ENCODE measurements at regions of chr21 and their contacts with region 1.

Region 1: GRCh38 chr21:29164325-29164942 is 34.0 kb downstream of the MAP3K7CL start:
- DNase-seq: peak in 2 of 5 donors; percentile 62 to 86
- H3K4me3 ChIP-seq: no peak overlapping the region
- H3K27ac ChIP-seq: no peak overlapping the region
- H3K4me1 ChIP-seq: no peaks in the 10 kb centered on the region
- H3K27me3 ChIP-seq: no peaks in the 10 kb centered on the region
- CTCF ChIP-seq: peak; percentile 79

Region 2: DNA sequence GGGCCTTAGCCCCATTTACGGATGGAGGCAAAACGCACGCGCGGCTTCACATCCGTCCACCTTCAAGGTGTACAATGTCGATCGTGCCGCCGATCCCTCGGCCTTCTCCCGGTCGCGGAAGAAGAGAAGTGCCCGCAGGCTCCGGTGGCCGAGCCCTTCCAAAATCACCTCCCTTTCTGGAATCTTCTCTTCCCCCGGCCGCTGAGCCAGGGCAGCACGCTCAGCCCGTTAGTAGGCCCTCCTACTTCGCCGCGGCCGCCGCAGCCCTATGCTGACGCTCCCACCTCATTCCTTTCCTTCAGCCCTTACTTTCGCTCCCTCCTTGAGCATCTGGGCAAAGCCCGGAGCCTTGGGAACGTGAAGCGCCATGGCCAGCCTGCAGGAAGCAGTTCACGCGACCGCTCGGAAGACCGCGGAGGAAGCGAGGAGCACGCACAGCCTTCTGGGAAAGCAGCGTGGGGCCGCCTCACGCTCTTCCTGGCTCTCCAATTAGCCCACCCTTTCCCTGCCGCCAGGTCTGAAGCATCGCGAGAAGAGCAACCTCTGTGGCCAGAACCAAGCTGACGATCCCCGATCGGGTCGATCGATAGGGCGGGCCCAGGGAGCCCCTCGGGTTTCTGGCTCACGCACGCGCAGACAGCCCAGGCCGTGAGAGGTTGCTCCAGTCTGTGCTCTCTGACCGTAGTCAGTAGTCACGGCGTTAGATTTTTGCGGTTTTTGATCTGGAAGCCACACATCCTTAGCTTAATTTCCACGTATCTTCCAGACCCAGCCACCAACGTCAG is 91.0 kb before region 1 on chr21 and contains the start of gene CCT8:
- intact Hi-C with region 1: no loop called
- DNase-seq: peak; percentile 99 to 100 (median 100)
- H3K4me3 ChIP-seq: peak within 1 kb of the TSS; percentile 90 to 99 (median 97)
- H3K27ac ChIP-seq: peak within 1 kb of the TSS; percentile 93 to 99
- H3K4me1 ChIP-seq: peaks cover 0 to 18% (median 12%) of the 10 kb centered on the region in 3 donors
- H3K27me3 ChIP-seq: no peaks in the 10 kb centered on the region
- CTCF ChIP-seq: no peak
- total RNA-seq, gene CCT8: 101 TPM

Region 3: DNA sequence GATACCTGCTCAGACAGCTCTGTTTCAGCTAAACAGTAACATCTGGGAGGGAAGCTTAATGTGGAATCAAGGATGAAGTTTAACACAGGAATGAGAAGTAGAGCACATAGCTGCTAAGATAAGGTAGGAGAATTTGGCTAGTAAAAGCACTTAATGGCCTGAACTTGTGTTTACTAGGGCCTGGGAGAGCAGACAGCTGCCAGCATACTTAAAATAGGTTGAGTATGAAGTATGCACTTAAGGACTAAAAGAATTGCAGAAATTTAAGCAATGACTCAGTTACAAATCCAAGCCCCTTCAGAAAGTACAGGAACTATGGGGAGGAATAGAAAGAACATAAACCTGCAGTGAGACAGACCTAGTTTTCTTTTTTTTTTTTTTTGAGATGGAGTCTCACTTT is 187.3 kb after region 1 on chr21:
- intact Hi-C with region 1: loop called (anchors 10 kb)
- DNase-seq: no peak
- H3K4me3 ChIP-seq: no peak overlapping the region
- H3K27ac ChIP-seq: no peak overlapping the region
- H3K4me1 ChIP-seq: peaks cover 0 to 10% (median 5%) of the 10 kb centered on the region in 3 donors
- H3K27me3 ChIP-seq: no peaks in the 10 kb centered on the region
- CTCF ChIP-seq: no peak